ENCODE measurements at regions of chr3 and their contacts with region 1.

Region 1: DNA sequence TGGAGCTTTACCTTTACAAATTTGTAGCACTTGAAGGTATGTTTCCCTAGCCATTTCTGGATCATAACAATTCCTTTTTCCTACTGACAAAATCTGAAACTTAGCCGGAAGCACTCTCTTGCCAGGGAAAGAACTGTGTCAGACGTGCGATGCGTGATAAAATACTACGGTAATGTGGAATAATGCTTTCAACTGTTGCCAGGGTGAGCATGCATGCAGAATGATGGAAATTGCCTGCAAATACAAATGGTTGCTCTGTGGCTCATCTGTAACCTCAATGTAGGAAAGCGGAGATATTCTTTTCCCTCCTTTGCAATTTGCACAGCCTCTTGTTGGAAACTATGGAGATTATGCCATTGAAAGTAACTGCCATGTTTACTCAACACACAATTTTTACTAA is 736.5 kb upstream of the CFAP20DC start:
- DNase-seq: no peak
- ATAC-seq: no peak

Region 2: DNA sequence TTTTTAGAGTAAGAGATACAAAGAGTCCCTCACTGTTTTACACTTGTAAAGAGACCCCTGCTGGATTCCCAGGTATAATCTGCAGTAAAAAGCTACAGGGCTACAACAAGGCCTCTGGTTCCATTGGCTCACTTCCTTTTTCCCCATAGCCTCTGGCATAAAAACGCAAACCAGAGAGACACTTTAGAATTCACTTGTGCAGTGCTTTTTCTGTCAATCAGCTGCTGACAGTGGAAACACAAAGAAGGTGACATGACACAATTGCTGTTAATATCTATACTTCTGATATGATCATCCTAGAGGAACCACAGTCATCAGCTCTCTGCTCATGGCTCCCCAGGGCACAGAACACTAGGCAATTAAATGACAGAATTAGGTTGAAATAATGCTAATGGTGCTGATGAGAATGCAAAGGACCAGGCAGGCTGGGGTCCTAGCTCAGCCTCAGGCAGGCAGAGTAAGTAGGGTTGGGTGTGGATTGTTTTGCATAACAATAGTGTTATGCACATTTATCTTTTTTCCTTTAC is 68.6 kb before region 1 on chr3:
- intact Hi-C with region 1: no loop called
- DNase-seq: no peak
- ATAC-seq: no peak

Region 3: DNA sequence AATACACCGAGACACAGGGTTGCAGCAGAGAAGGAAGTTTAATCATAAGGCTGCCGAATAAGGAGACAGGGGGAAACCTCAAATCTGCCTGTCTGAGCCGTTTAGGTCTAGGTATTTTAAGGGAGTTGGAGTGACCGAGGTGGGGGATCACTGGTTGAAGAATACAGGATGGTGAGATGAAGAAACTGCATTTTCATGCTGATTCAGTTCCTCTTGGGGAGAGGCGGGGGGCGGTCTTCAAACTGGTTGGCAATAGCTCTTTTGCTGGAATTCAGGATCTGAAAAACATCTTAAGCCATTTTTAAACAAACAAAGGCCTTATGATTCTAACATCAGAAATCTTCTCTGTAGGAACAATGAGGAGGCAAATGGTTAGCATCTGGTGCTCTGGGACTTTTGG is 37.1 kb before region 1 on chr3:
- intact Hi-C with region 1: loop called (anchors 5 kb)
- DNase-seq: no peak
- ATAC-seq: no peak

Region 4: GRCh38 chr3:59839810-59840515 is 53.6 kb after region 1 on chr3:
- intact Hi-C with region 1: no loop called
- DNase-seq: no peak
- ATAC-seq: no peak